CD8-positive, alpha-beta T cell (primary cell): ENCODE measurements at regions of chr17 and their contacts with region 1.

Region 1: DNA sequence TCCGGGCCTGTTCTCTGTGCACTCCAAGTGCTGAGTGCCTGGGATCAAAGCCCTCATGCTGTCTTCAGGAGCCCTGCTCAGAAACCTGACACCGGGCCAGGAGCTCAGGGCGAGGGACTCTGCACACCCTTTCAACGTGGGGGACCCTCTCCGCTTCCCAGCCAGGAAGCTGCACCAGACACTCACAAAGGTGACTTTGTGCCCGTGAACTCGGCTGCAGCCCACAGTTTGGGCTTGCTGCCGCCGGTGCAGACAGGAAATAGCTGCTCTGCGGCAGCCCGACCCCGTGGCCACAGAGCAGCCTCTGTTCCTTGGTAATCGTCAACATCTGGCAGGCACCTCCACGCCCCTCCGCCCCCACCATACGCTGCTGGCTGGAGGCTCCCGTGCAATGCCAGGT is 93.4 kb upstream of the METRNL start:
- DNase-seq: peak; percentile 54 to 85 (median 76)
- ATAC-seq: peak; percentile 83
- H3K4me3 ChIP-seq: peak overlapping the region; percentile 16 to 26
- H3K4me3 Mint-ChIP-seq: peak overlapping the region; percentile 74
- H3K27ac ChIP-seq: peak overlapping the region; percentile 14 to 47
- H3K27ac Mint-ChIP-seq: peak overlapping the region; percentile 89
- H3K4me1 ChIP-seq: peaks cover 30% of the 10 kb centered on the region
- H3K4me1 Mint-ChIP-seq: peaks cover 53% of the 10 kb centered on the region
- H3K27me3 ChIP-seq: no peaks in the 10 kb centered on the region
- H3K27me3 Mint-ChIP-seq: no peaks in the 10 kb centered on the region
- CTCF ChIP-seq: no peak

Region 2: DNA sequence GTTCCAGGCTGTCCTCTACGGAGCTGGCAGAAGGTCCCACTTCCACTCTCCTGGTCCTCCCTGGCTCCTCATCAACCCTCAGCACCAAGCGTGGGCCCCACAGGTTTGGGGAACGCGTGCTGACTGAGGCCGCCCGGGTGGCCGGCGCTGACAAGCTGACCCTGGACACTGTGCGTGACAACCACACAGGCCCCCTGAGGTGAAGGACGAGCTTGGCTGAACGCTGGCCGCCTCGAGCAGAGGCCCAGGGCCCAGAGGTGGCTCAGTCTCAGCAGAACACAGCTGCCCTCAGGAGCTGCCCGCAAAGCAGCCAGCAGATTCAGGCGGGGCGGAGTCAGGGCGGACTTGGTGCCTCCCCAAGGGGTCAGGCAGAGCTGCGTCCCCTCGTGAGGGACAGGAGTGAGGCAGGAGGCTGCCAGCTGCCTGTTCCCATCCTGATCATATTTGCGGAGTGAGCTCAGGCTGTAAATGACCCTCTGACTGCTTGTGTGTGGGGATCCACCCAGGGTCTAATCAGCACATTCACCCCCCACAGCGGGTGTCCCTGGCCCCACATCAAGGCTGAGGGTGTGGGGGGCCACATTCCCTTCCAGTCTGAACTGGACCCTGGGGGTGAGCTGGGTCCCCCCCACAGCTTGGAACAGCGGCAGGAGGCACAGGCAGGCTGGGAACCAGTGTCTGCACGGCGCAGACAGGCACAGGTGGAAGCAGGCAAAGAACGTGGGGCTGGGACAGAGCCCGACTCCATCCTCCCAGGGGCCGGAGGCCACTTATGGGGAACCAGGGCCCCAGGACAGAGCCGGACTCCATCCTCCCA is 11.6 kb before region 1 on chr17:
- CTCF ChIA-PET with region 1: no interaction called
- POLR2A ChIA-PET with region 1: no interaction called
- intact Hi-C with region 1: no loop called
- DNase-seq: no peak
- ATAC-seq: no peak
- H3K4me3 ChIP-seq: no peak overlapping the region
- H3K4me3 Mint-ChIP-seq: no peak overlapping the region
- H3K27ac ChIP-seq: no peak overlapping the region
- H3K27ac Mint-ChIP-seq: no peak overlapping the region
- H3K4me1 ChIP-seq: peaks cover 16% of the 10 kb centered on the region
- H3K4me1 Mint-ChIP-seq: peaks cover 13% of the 10 kb centered on the region
- H3K27me3 ChIP-seq: no peaks in the 10 kb centered on the region
- H3K27me3 Mint-ChIP-seq: no peaks in the 10 kb centered on the region
- CTCF ChIP-seq: no peak

Region 3: GRCh38 chr17:83051395-83052233 is 65.6 kb after region 1 on chr17:
- CTCF ChIA-PET with region 1: no interaction called
- POLR2A ChIA-PET with region 1: interaction called, 7 read pairs
- intact Hi-C with region 1: loop called (anchors 2 to 5 kb)
- DNase-seq: peak; percentile 95 to 99 (median 99)
- ATAC-seq: peak; percentile 85
- H3K4me3 ChIP-seq: peak overlapping the region; percentile 49 to 68
- H3K4me3 Mint-ChIP-seq: peak overlapping the region; percentile 86
- H3K27ac ChIP-seq: peak overlapping the region; percentile 75 to 87
- H3K27ac Mint-ChIP-seq: peak overlapping the region; percentile 94
- H3K4me1 ChIP-seq: peaks cover 40% of the 10 kb centered on the region
- H3K4me1 Mint-ChIP-seq: peaks cover 40% of the 10 kb centered on the region
- H3K27me3 ChIP-seq: no peaks in the 10 kb centered on the region
- H3K27me3 Mint-ChIP-seq: no peaks in the 10 kb centered on the region
- CTCF ChIP-seq: no peak